ENCODE measurements at regions of chr10 and their contacts with region 1.

Region 1: DNA sequence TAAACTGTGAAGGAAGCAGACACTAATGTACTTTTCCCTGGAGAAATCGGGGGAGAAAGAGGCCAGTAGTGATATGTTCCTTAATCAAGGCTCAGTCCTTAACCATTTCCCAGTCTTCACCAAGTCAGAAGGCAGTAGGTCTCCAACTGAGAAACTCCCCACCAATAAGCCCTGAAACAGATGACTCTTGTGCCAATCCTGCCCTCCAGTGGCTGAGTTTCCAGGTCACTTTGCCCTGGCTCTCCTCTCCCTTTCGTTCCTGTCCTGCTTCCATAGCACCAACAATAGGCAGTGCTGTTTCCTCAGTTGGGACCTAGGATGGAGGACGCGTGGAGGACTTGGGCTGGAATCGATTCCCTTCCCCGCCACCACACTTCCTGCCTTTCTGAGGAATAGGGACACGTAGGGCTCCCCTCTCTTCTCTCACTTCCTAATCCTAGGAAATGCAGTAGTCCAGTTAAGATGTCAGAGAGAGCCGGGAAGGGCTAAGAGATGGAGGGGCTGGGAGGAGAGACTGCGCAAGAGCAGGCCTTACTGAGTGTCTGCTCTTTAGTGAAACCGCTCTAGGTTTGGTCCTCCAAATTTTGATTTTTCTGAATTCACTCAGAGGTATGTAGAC is 23.4 kb downstream of the ATOH7 start:
- DNase-seq: peak; percentile 79
- ATAC-seq: peak; percentile 94
- H3K4me3 ChIP-seq: no peak overlapping the region
- H3K27ac ChIP-seq: no peak overlapping the region
- H3K4me1 ChIP-seq: peaks cover 2% of the 10 kb centered on the region
- H3K27me3 ChIP-seq: no peaks in the 10 kb centered on the region
- CTCF ChIP-seq: peak; percentile 76
- POLR2A ChIP-seq: no peak
- RAD21 ChIP-seq: peak; percentile 87

Region 2: GRCh38 chr10:68082872-68083271 is 125.7 kb before region 1 on chr10:
- CTCF ChIA-PET with region 1: interaction called, 5 read pairs
- POLR2A ChIA-PET with region 1: no interaction called
- dilution Hi-C with region 1: no loop called
- in situ Hi-C with region 1: loop called (anchors 10 kb)
- intact Hi-C with region 1: loop called (anchors 1 kb)
- DNase-seq: peak; percentile 67
- ATAC-seq: peak; percentile 79
- H3K4me3 ChIP-seq: no peak overlapping the region
- H3K27ac ChIP-seq: peak overlapping the region; percentile 23; the same call in 1 of the 2 replicates
- H3K4me1 ChIP-seq: peaks cover 10% of the 10 kb centered on the region
- H3K27me3 ChIP-seq: no peaks in the 10 kb centered on the region
- CTCF ChIP-seq: peak; percentile 77
- POLR2A ChIP-seq: no peak
- RAD21 ChIP-seq: peak; percentile 83

Region 3: DNA sequence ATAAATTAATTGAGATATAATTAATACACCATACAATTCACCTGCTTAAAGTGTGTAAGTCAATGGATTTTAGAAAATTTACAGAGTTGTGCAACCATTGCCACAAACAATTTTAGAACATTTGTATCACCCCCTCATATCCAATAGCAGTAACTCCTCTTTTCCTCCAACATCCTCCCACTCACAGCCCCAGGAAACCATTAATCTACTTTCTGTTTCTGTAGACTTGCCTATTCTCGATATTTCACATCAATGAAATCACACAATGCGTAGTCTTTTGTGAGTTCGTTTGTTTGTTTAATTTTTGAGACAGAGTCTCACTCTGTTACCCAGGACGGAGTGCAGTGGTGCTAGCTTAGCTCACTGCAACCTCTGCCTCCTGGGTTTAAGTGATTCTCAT is 119.8 kb before region 1 on chr10:
- CTCF ChIA-PET with region 1: interaction called, 4 read pairs
- POLR2A ChIA-PET with region 1: no interaction called
- dilution Hi-C with region 1: no loop called
- in situ Hi-C with region 1: loop called (anchors 10 kb)
- intact Hi-C with region 1: loop called (anchors 1 kb)
- DNase-seq: peak; percentile 87
- ATAC-seq: peak; percentile 15
- H3K4me3 ChIP-seq: peak overlapping the region; percentile 28; the same call in 1 of the 2 replicates
- H3K27ac ChIP-seq: peak overlapping the region; percentile 19
- H3K4me1 ChIP-seq: peaks cover 15% of the 10 kb centered on the region
- H3K27me3 ChIP-seq: no peaks in the 10 kb centered on the region
- CTCF ChIP-seq: no peak
- POLR2A ChIP-seq: no peak
- RAD21 ChIP-seq: no peak

Measured in IMR-90 (cell line).